Motor neuron (in vitro differentiated cells): ENCODE measurements at regions of chr3 and their contacts with region 1.

Region 1: DNA sequence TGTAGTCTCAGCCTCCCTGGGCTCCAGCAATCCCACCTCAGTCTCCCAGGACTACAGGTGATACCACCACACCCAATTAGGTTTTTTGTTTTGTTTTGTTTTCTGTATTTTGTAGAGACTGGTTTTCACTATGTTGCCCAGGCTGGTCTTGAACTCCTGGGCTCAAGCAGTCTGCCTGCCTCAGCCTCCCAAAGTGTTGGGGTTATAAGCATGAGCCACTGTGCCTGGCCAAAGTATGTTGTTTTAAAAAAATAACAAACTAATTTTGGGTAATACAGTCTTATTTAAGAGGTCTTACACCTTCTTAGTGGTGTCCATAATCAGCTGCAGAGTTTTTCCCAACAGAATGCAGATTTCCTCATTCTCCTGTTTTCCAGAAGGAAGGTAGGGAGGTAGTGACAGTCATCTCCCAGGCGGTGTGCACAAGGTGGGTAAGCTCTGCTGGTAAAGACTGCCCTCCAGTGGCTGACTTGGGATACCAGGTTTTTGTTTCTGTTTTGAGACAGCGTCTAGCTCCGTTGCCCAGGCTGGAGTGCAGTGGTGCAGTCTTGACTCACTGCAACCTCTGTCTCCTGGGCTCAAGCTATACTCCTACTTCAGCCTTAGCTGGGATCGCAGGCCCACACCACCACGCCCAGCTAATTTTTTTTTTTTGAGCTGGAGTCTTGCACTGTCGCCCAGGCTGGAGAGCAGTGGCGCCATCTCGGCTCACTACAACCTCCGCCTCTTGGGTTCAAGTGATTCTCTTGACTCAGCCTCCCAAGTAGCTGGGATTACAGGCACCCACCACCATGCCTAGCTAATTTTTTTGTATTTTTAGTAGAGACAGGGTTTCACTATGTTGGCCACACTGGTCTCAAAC is 58.4 kb downstream of the MAP6D1 start:
- ATAC-seq: peak; percentile 61 to 97 (median 75)
- H3K4me3 ChIP-seq: no peak overlapping the region
- H3K27ac ChIP-seq: no peak overlapping the region
- H3K4me1 ChIP-seq: no peaks in the 10 kb centered on the region

Region 2: GRCh38 chr3:183455089-183455488 is 311.9 kb before region 1 on chr3:
- in situ Hi-C with region 1: loop called in 3 of 9 experiments (anchors 25 kb)
- ATAC-seq: peak in 6 of 8 experiments; percentile 19 to 96 (median 90)
- H3K4me3 ChIP-seq: no peak overlapping the region
- H3K27ac ChIP-seq: no peak overlapping the region
- H3K4me1 ChIP-seq: peaks cover 11 to 15% of the 10 kb centered on the region in 2 donors

Region 3: DNA sequence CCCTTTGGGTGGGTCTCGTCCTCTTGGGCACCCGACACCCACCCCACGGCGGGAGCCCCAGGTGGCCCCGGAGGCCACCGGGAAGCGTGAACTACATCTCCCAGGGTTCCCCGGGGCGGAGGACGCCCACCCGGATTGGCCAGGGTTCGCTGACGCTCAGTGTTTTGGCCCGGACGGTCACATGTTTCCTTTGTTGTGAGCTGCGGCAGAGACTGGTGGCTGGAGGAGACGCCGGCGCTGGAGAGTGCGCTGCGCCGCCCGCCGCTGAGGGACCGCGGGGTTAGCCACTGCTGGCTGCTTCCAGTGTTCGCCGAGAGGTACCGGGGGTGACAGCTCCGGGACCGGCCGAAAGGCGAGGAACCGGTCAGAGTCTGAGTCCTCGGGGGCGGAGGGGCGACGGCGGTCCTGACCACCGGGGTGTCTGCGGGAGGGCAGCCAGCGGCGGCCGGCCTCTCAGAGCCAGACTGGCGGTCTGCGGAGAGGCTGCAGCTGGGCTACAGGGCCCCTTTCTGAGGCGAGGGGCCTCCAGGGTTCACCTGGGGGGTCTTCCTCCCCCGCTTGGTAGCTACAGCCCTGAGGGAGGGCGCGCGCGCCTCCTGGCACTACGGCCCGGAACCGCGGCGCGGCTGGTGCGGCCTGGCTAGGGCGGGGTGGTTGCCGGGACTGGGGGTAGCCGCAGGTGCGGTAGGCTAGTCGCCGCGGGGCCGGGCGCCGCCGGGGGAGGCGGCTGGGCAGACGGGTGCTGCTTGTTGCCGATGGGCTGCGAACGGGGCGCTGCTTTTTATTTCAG is 131.3 kb before region 1 on chr3 and contains the start of gene KLHL24:
- in situ Hi-C with region 1: no loop called
- ATAC-seq: peak; percentile 66 to 83 (median 74)
- H3K4me3 ChIP-seq: peak within 1 kb of the TSS; percentile 72 to 96 (median 89)
- H3K27ac ChIP-seq: peak within 1 kb of the TSS; percentile 95 to 97
- H3K4me1 ChIP-seq: peaks cover 7 to 11% of the 10 kb centered on the region in 2 donors
- total RNA-seq, gene KLHL24: 56.9 to 220 (median 92.6) TPM